Activated T-helper 2 cell treated with anti-CD3 and anti-CD28 coated beads, Interferon-gamma antibody, Interleukin-2, Interleukin-4, amounts not matched to agents 10 μg/mL and 5 μg/mL and 100 μg/mL, durations not matched to agents 14 hours and 24 hours and 36 hours (primary cell): ENCODE measurements at regions of chr3 and their contacts with region 1.

Region 1: DNA sequence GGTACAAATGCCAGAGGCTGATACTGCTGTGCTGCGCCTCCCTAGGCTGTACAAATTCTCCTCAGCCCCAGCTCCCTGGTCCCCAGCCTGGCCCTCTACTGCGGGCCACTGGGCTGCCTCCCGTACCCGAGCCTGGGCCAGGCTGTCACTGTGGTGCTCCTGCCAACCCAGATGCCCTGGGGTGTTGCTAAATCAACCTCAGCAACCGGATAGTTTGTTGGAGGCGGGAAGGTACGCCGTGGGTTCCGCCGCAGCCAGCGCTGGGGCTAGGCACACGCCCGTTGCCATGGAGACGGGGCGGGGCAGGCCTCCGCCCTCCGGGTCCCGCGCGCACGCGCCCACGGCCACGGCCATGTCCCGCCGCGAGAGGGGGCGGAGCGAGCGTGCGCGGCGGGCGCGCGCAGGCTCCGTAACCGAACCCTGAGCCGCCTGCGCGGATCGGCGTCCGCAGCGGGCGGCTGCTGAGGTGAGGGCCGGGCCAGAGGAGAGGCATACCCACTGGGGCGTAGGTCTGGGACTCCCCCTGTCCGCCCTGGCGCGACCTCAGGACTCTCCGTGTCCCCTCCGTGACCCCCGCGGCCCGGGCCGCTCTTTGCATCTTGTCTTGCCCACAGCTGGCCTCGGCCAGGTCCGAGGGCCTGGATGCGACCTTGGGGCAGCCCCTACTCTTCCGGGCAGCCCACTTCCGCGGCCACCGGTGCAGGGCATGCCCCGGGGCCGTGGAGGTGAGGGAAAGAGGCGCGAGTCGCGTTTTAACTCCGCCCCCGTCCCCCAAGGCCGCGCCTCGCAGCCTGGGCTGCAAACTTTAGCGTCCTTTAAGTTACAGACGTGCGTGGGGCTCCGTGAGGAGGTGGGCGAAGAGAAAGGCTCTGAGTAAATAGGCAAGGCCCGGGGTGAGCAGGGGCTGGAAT is at the start of gene TEX264:
- DNase-seq: peak; percentile 93
- H3K4me3 Mint-ChIP-seq: peak within 1 kb of the TSS; percentile 86
- H3K27ac Mint-ChIP-seq: peak within 1 kb of the TSS; percentile 79
- H3K4me1 Mint-ChIP-seq: peaks cover 60% of the 10 kb centered on the region
- H3K27me3 Mint-ChIP-seq: no peaks in the 10 kb centered on the region
- total RNA-seq, gene TEX264: 43.1 TPM in 2 replicates

Region 2: GRCh38 chr3:50358911-50359759 is 1311.9 kb before region 1 on chr3 and contains the start of gene TMEM115:
- intact Hi-C with region 1: loop called (anchors 10 kb)
- DNase-seq: peak; percentile 93
- H3K4me3 Mint-ChIP-seq: peak within 1 kb of the TSS; percentile 98
- H3K27ac Mint-ChIP-seq: peak within 1 kb of the TSS; percentile 94
- H3K4me1 Mint-ChIP-seq: peaks cover 27% of the 10 kb centered on the region
- H3K27me3 Mint-ChIP-seq: no peaks in the 10 kb centered on the region
- total RNA-seq, gene TMEM115: 17.8 and 19.2 TPM in 2 replicates

Region 3: GRCh38 chr3:51391075-51391567 is 280.0 kb before region 1 on chr3 and contains the start of gene RBM15B:
- intact Hi-C with region 1: loop called (anchors 2 kb)
- DNase-seq: peak; percentile 97
- H3K4me3 Mint-ChIP-seq: peak within 1 kb of the TSS; percentile 82
- H3K27ac Mint-ChIP-seq: peak within 1 kb of the TSS; percentile 83
- H3K4me1 Mint-ChIP-seq: peaks cover 54% of the 10 kb centered on the region
- H3K27me3 Mint-ChIP-seq: no peaks in the 10 kb centered on the region
- total RNA-seq, gene RBM15B: 36.1 and 37.4 TPM in 2 replicates

Region 4: GRCh38 chr3:51538459-51539290 is 132.4 kb before region 1 on chr3 and contains the start of gene RAD54L2:
- intact Hi-C with region 1: loop called (anchors 1 kb)
- DNase-seq: peak; percentile 68
- H3K4me3 Mint-ChIP-seq: peak within 1 kb of the TSS; percentile 91
- H3K27ac Mint-ChIP-seq: peak within 1 kb of the TSS; percentile 91
- H3K4me1 Mint-ChIP-seq: peaks cover 27% of the 10 kb centered on the region
- H3K27me3 Mint-ChIP-seq: no peaks in the 10 kb centered on the region
- total RNA-seq, gene RAD54L2: 39.3 and 40.0 TPM in 2 replicates

Region 5: GRCh38 chr3:51682079-51682478 is 11.0 kb after region 1 on chr3:
- intact Hi-C with region 1: loop called (anchors 1 kb)
- DNase-seq: peak; percentile 78
- H3K4me3 Mint-ChIP-seq: peak overlapping the region; percentile 70
- H3K27ac Mint-ChIP-seq: peak overlapping the region; percentile 68
- H3K4me1 Mint-ChIP-seq: peaks cover 73% of the 10 kb centered on the region
- H3K27me3 Mint-ChIP-seq: no peaks in the 10 kb centered on the region

Region 6: GRCh38 chr3:51729042-51729633 is 58.1 kb after region 1 on chr3:
- intact Hi-C with region 1: no loop called
- DNase-seq: no peak
- H3K4me3 Mint-ChIP-seq: no peak overlapping the region
- H3K27ac Mint-ChIP-seq: peak overlapping the region; percentile 74
- H3K4me1 Mint-ChIP-seq: peaks cover 34% of the 10 kb centered on the region
- H3K27me3 Mint-ChIP-seq: peaks cover 5% of the 10 kb centered on the region

Region 7: DNA sequence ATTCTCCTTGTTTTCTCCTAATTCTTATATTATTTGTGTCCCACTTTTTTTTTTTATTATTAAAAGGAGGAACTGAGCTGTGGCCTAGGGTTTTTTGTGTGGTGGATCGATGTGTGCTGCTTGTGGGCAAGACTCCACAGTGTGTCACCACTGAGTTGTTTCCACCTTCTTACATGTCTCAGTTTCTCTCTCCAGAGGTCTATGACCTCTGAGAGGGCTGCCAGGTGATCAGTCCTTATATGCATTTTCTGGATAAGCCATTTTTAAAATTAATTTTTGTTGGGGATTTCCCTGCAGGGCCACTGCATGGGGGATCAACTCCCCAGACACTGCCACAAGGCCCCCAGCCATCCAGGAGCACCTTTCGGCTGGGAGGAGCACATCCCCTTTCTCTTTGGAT is 80.2 kb after region 1 on chr3:
- intact Hi-C with region 1: no loop called
- DNase-seq: no peak
- H3K4me3 Mint-ChIP-seq: no peak overlapping the region
- H3K27ac Mint-ChIP-seq: no peak overlapping the region
- H3K4me1 Mint-ChIP-seq: peaks cover 5% of the 10 kb centered on the region
- H3K27me3 Mint-ChIP-seq: peaks cover 23% of the 10 kb centered on the region